PC-9 (cell line): ENCODE measurements at regions of chr4 and their contacts with region 1.

Region 1: DNA sequence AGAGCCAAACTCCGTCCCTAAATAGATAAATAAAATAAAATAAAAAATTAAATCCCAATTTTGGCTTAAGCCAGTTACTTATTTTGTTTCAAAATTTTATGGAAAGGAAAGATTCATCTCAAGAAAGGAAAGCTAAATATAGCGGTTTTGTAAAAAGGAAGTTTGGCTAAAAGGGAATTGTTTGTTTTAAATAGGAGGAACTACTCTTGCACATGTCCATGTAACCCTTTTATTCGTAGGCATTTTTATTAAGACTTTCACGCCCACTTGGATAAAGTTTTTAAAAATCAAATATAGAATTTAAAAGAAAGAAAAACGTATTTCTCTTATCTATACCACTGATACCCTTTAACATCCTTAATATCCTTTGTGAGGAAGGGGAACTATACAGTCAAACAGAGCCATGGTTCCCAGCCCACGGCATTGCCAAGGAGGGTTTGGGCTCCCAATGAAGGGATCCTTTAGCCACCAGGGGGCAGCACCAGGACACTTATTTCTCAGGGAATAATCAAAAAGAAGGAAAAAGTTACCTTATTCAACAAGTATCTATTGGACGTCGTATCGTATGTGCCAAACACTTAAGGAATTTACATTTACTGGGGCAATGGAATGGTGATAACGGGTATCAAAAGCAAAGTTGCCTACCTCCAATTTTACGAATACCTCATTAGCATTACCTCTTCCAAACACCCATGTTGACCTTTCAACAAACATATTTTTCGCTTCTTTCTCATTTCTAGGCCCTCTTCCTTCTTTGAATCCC is 27.7 kb downstream of the CDKN2AIP start:
- DNase-seq: peak; percentile 46 to 72
- H3K4me3 ChIP-seq: no peak overlapping the region
- H3K27ac ChIP-seq: no peak overlapping the region
- H3K4me1 ChIP-seq: peaks cover 10% of the 10 kb centered on the region; the same call in 1 of the 2 replicates
- H3K27me3 ChIP-seq: no peaks in the 10 kb centered on the region
- CTCF ChIP-seq: peak; percentile 82

Region 2: GRCh38 chr4:182418054-182418734 is 1053.9 kb before region 1 on chr4:
- CTCF ChIA-PET with region 1: no interaction called
- POLR2A ChIA-PET with region 1: no interaction called
- intact Hi-C with region 1: no loop called
- DNase-seq: no peak
- H3K4me3 ChIP-seq: no peak overlapping the region
- H3K27ac ChIP-seq: no peak overlapping the region
- H3K4me1 ChIP-seq: no peaks in the 10 kb centered on the region
- H3K27me3 ChIP-seq: no peaks in the 10 kb centered on the region
- CTCF ChIP-seq: no peak

Region 3: DNA sequence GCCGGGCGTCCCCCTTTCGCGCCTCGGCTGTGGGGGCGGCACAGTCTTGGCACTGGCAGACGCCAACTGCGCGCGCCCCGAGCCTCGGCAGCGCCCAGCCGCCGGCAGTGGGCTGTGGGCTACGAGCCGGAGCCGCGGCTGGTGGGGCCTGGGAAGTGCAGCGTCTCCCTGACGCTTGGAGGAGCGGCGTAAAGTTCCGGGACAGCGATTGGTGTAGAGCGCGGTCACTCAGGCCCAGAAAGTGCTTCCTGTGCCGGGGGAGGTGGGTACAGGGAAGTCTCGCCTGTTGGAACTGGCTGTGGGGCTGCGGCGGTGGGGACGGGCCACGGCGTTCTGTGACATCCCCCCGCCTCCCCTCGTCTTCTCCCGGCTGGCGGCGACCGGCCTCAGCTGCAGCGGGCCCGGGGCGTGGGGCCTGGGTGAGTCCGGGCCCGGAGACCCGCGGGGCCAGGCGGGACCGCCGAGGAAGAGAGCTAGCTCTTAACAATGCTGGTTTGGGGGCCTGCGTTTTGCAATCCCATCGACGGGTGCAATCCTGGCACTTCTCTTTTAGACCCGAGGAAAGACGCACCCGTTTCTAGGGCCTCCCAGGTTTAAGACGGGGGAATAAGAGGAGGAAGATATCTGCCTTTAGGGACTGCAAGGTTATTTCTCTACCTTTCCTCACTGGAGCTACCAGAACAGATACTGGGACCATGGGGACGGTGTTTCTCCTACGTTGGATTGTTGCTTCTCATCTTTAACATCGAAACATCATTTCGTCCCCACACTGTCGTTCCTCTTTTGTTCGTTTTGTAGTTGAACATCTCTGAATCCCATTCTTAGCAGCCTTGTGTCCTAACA is 187.1 kb after region 1 on chr4 and contains the starts of genes RWDD4 and TRAPPC11:
- CTCF ChIA-PET with region 1: no interaction called
- POLR2A ChIA-PET with region 1: no interaction called
- intact Hi-C with region 1: loop called (anchors 2 kb)
- DNase-seq: peak; percentile 89 to 96
- H3K4me3 ChIP-seq: peak within 1 kb of the TSS; percentile 92
- H3K27ac ChIP-seq: peak within 1 kb of the TSS; percentile 28
- H3K4me1 ChIP-seq: peaks cover 18% of the 10 kb centered on the region
- H3K27me3 ChIP-seq: no peaks in the 10 kb centered on the region
- CTCF ChIP-seq: no peak; the same call in 1 of the 2 replicates
- total RNA-seq, gene RWDD4: 16.8 and 21.5 TPM in 2 replicates
- total RNA-seq, gene TRAPPC11: 29.0 and 31.7 TPM in 2 replicates

Region 4: DNA sequence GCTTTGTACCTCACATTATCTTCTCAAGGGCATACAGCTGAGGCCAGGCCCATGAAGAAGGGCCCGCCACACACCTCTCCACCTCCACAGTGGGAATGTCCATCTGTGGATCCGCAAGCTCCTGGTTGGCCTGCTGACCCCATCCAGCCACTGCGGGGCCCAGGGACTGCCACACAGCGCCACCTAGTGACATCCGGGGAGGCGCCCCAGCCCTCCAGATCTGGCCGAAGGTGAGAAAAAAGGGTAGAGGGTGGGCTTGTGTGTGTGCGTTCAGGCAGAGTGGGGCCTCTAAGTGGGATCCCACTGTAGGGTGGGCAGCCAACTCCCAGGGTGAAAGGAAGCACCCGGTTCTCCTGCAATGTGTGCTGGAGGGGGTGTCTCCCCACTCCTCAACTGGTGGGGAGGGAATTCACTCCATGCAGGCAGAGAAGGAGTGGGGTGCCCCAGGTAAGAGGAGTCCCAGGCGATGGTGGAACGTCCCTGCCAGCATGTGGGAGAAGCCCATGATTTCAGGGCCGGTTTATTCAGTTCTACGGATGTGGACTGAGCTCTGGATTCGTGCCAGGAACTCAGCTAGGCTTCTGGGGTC is 628.3 kb after region 1 on chr4:
- CTCF ChIA-PET with region 1: interaction called, 3 read pairs
- POLR2A ChIA-PET with region 1: no interaction called
- intact Hi-C with region 1: loop called (anchors 2 kb)
- DNase-seq: peak in 1 of 2 experiments; percentile 68
- H3K4me3 ChIP-seq: no peak overlapping the region
- H3K27ac ChIP-seq: no peak overlapping the region
- H3K4me1 ChIP-seq: no peaks in the 10 kb centered on the region
- H3K27me3 ChIP-seq: no peaks in the 10 kb centered on the region; the same call in 1 of the 2 replicates
- CTCF ChIP-seq: peak; percentile 83